KBM-7 (cell line): ENCODE measurements at regions of chr17 and their contacts with region 1.

Region 1: DNA sequence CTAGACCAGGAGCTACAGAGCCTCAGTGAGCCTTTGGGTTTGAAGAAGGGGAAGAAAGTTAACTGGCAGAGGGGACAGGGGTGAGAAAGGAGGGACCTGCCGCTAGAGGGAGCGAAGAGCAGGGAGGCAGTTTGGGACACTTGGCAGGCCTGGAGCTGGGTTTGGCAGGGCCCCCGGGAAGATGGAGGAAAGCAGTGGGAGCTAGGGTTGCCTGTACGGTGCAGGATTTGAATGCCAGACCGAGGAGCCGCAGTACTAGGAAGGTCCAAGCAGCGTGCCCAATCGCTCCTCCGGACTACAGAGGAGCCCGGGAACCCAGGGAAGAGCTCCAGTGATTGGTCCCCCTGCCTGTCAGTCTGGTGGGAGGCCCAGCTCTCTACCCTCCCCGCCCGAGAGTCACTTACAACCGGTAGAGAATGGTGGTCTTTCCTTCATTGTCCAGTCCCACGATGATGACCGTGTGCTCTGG is 1.3 kb downstream of the ARL5C start:
- DNase-seq: peak; percentile 94

Region 2: DNA sequence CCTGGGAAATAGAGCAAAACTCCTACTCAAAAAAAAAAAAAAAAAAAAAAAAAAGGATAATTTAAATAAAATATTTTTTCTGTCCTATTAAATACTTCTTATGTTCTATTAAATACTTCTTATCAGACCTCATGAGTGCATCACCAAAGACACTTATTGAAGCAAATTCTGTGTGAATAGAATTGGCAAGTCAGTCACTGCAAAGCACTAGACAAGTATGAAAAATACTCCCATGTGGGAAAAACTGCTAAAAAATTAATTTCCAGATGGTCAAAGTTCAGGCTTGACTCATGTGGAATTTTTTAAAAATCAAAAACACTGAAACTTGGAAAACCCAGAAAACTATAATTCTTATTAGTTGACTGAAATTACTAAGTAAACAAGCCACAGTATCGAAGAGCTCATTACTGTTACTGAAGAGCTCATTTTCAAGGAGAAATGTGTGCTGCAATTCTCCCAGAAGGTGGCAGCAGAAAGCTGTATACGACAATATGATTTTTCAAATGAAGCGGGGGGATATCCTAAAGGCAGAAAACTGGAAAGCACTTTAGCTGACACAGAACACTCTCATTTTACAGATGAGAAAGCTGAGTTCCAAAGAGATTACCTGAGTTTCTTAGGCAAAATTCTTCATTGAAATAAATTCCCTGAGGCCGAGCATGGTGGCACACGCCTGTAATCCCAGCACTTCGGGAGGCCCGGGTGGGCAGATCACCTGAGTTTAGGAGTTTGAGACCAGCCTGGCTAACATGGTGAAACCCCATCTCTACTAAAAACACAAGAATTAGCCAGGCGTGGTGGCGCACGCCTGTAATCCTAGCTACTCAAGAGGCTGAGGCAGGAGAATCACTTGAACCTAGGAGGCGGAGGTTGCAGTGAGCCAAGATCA is 181.6 kb before region 1 on chr17:
- in situ Hi-C with region 1: loop called (anchors 25 kb)
- DNase-seq: peak; percentile 77